AG04449 (cell line): ENCODE measurements at regions of chr14 and their contacts with region 1.

Region 1: GRCh38 chr14:68248481-68249255 is 429.1 kb downstream of the RAD51B start:
- DNase-seq: no peak
- H3K4me3 ChIP-seq: no peak overlapping the region
- CTCF ChIP-seq: peak; percentile 21

Region 2: GRCh38 chr14:67943947-67944346 is 304.7 kb before region 1 on chr14:
- CTCF ChIA-PET with region 1: interaction called, 67 read pairs
- POLR2A ChIA-PET with region 1: no interaction called
- DNase-seq: no peak
- H3K4me3 ChIP-seq: no peak overlapping the region
- CTCF ChIP-seq: peak; percentile 43

Region 3: GRCh38 chr14:68268197-68268596 is 19.5 kb after region 1 on chr14:
- CTCF ChIA-PET with region 1: no interaction called
- POLR2A ChIA-PET with region 1: no interaction called
- DNase-seq: no peak
- H3K4me3 ChIP-seq: no peak overlapping the region
- CTCF ChIP-seq: no peak

Region 4: GRCh38 chr14:68363843-68364767 is 115.4 kb after region 1 on chr14:
- CTCF ChIA-PET with region 1: no interaction called
- POLR2A ChIA-PET with region 1: no interaction called
- DNase-seq: no peak
- H3K4me3 ChIP-seq: no peak overlapping the region
- CTCF ChIP-seq: no peak

Region 5: DNA sequence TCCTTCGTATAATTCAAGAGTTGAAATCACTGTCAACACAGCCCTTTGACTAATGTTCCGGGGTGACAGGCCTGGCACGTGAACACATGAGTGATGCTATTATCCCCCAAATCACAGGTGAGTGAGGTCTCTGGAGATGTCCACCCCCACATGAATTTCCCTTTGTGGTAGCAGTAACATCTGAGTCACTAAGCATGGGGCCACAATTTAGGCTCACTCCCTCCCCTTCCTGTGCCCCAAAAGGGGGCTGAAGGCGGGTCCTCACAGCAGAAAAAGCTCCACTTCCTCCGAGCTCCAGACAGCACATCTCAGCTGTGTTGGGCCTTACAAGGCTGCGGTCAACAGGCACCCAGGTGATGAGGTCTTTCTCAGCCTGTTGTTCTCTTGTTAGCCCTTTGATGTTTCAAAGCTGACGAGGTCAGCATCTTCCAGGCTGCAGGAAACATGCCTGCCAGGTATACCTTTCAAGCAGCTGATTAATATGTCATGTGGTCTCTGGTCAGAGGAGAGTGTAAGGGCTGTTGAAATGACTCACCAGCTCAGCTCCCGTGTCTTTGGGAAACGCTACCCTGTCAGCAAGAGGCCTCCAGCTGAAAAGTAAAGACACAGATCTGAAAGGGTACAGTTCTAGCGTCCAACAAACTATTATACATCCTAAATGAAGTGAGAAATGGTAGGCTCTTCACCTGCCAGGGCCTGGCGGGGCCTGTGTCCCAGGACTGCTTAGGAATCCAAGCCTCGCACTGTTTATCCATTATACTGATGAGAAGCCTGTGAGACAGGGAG is 436.9 kb after region 1 on chr14:
- CTCF ChIA-PET with region 1: interaction called, 11 read pairs
- POLR2A ChIA-PET with region 1: no interaction called
- DNase-seq: no peak
- H3K4me3 ChIP-seq: no peak overlapping the region
- CTCF ChIP-seq: no peak

Region 6: GRCh38 chr14:68788996-68789820 is 540.5 kb after region 1 on chr14:
- CTCF ChIA-PET with region 1: interaction called, 54 read pairs
- POLR2A ChIA-PET with region 1: interaction called, 18 read pairs
- DNase-seq: no peak
- H3K4me3 ChIP-seq: peak overlapping the region; percentile 99
- CTCF ChIP-seq: peak; percentile 83

Region 7: GRCh38 chr14:68824517-68825347 is 576.1 kb after region 1 on chr14:
- CTCF ChIA-PET with region 1: interaction called, 184 read pairs
- POLR2A ChIA-PET with region 1: no interaction called
- DNase-seq: no peak
- H3K4me3 ChIP-seq: no peak overlapping the region
- CTCF ChIP-seq: peak; percentile 93

Region 8: GRCh38 chr14:69288011-69288771 is 1039.5 kb after region 1 on chr14:
- CTCF ChIA-PET with region 1: no interaction called
- POLR2A ChIA-PET with region 1: no interaction called
- DNase-seq: no peak
- H3K4me3 ChIP-seq: no peak overlapping the region
- CTCF ChIP-seq: peak; percentile 42